Calu3 (cell line): ENCODE measurements at regions of chr16 and their contacts with region 1.

Region 1: DNA sequence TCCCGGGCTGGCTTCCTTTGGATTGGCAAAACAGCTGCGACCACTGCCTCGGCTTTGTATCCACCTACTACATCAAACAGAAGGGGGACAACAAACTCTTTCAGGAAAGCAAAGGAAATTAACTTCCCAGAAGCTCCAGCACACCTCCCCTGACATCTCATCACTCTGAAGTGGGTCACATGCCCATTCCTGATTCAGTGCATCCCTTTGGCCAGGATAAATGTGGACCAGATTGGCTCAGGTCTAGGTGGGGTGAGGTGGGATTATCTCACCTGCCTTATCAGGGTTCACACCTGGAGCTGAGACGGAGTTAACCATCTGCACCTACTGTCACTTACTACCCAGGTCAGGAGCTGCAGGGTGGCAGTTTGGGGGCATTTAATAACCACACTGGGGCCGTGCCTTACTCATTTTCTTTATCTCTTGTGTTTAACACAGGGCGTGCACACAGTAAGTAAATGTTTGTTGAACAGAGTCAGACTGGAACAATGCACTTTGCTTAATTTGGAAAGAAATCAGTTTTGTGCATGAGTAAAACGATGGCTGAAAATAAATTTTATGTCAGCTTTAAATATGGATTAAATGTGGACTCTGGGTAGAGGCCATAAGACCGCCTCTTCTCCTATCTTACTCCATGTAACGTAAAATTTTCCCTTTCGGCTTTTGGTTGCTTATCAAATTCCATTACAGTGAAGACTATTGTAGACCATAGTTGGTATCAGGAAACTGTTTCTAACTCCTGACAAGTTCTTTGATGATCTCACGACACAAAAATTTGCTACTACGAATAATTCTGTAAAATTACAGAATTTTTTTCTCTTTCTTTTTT is 36.0 kb downstream of the IQCK start:
- DNase-seq: peak; percentile 65
- H3K4me3 Mint-ChIP-seq: peak overlapping the region; percentile 27
- H3K27ac Mint-ChIP-seq: peak overlapping the region; percentile 98
- H3K4me1 Mint-ChIP-seq: peaks cover 80% of the 10 kb centered on the region
- H3K27me3 Mint-ChIP-seq: no peaks in the 10 kb centered on the region
- CTCF ChIP-seq: no peak

Region 2: GRCh38 chr16:19044769-19045168 is 709.3 kb before region 1 on chr16:
- CTCF ChIA-PET with region 1: no interaction called
- intact Hi-C with region 1: no loop called
- DNase-seq: no peak
- H3K4me3 Mint-ChIP-seq: no peak overlapping the region
- H3K27ac Mint-ChIP-seq: no peak overlapping the region
- H3K4me1 Mint-ChIP-seq: no peaks in the 10 kb centered on the region
- H3K27me3 Mint-ChIP-seq: no peaks in the 10 kb centered on the region
- CTCF ChIP-seq: no peak

Region 3: GRCh38 chr16:19700319-19700781 is 53.7 kb before region 1 on chr16:
- CTCF ChIA-PET with region 1: interaction called, 3 read pairs
- intact Hi-C with region 1: loop called (anchors 5 kb)
- DNase-seq: peak; percentile 73
- H3K4me3 Mint-ChIP-seq: peak overlapping the region; percentile 30
- H3K27ac Mint-ChIP-seq: peak overlapping the region; percentile 69
- H3K4me1 Mint-ChIP-seq: peaks cover 45% of the 10 kb centered on the region
- H3K27me3 Mint-ChIP-seq: no peaks in the 10 kb centered on the region
- CTCF ChIP-seq: no peak

Region 4: GRCh38 chr16:19710191-19710908 is 43.7 kb before region 1 on chr16:
- CTCF ChIA-PET with region 1: no interaction called
- intact Hi-C with region 1: no loop called
- DNase-seq: no peak
- H3K4me3 Mint-ChIP-seq: no peak overlapping the region
- H3K27ac Mint-ChIP-seq: peak overlapping the region; percentile 7
- H3K4me1 Mint-ChIP-seq: peaks cover 36% of the 10 kb centered on the region
- H3K27me3 Mint-ChIP-seq: no peaks in the 10 kb centered on the region
- CTCF ChIP-seq: no peak

Region 5: GRCh38 chr16:19808061-19808621 is 54.1 kb after region 1 on chr16:
- CTCF ChIA-PET with region 1: interaction called, 6 read pairs
- intact Hi-C with region 1: loop called (anchors 1 kb)
- DNase-seq: peak; percentile 85
- H3K4me3 Mint-ChIP-seq: peak overlapping the region; percentile 27
- H3K27ac Mint-ChIP-seq: peak overlapping the region; percentile 94
- H3K4me1 Mint-ChIP-seq: peaks cover 85% of the 10 kb centered on the region
- H3K27me3 Mint-ChIP-seq: no peaks in the 10 kb centered on the region
- CTCF ChIP-seq: no peak